Astrocyte of the cerebellum (primary cell): ENCODE measurements at regions of chr2 and their contacts with region 1.

Region 1: DNA sequence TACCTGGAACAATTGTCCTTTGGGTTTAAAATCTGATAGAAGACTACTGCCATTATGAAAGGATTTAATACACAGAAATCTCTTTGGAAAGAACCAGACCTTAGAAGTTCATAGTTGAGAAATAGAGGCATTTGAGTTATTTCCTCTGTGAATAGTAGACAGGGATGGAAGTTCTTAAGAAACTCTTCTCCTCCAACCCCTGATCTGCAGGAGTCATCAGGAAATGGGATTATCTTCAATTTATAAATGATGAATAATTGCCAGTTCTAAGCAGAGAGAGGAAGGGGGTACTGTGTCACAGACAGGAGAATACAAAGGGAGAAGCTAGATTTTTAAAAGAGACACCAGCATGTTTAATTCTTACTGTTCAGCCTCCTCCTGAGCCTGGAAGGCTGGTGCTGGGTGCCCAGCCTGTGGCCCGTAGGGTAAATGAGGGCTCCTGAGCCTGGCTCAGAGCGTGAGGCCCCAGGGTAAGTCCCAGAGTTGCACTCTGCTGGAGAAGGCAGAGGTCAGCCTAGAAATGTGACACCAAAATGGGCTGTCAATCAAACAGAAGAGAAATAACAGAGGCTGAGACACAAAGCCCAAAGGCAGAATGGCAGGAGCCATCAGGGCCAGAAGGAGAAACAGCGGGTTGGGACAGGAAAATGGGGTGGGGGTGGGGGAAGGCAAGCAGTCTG is 58.2 kb upstream of the PKDCC start:
- DNase-seq: no peak
- H3K4me3 ChIP-seq: no peak overlapping the region
- CTCF ChIP-seq: no peak

Region 2: GRCh38 chr2:41940770-41941113 is 48.9 kb before region 1 on chr2:
- in situ Hi-C with region 1: loop called (anchors 5 kb)
- DNase-seq: no peak
- H3K4me3 ChIP-seq: no peak overlapping the region
- CTCF ChIP-seq: no peak